ENCODE measurements at regions of chr4 and their contacts with region 1.

Region 1: DNA sequence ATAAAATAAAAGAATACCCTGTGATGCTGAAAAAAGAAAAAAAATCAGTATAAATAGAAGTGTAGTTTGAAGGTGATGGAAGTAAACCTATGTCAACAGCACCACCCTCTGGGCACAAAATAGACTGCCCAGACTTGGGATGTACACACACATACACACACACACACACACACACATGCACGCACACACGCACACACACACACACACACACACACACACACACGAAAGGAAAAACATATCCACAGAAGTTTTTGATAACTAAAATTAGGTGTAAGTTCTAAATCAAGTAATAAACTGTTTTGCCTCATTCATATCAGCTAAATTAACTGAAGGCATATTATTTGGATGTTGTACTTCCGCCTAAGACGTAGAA is 40.5 kb downstream of the ANXA5 start:
- ATAC-seq: peak; percentile 57 to 82 (median 70)
- H3K4me3 ChIP-seq: no peak overlapping the region
- H3K27ac ChIP-seq: no peak overlapping the region
- H3K4me1 ChIP-seq: no peaks in the 10 kb centered on the region

Region 2: DNA sequence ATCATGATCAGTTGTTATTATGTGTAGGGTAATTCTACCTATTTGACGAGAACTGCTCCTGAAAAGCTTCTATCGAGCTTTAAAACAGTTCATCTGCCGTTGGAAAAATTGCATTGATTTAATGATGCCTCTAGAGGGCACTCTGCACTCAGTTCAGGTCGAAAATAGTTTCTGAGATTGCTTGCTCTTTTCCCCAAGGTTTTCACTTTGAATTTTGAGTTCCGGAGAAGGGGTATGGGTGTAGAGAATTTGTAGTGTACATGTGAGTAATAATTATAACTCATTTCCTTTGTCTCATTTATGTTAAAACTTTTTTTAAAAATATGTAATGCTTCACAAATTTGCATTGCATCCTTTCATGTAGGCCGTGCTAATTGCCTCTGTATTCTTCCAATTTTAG is 463.8 kb before region 1 on chr4:
- in situ Hi-C with region 1: loop called in 1 of 9 experiments (anchors 25 kb)
- ATAC-seq: peak in 4 of 8 experiments; percentile 11 to 25 (median 18)
- H3K4me3 ChIP-seq: no peak overlapping the region
- H3K27ac ChIP-seq: no peak overlapping the region
- H3K4me1 ChIP-seq: no peaks in the 10 kb centered on the region

Region 3: GRCh38 chr4:121484633-121485032 is 171.6 kb before region 1 on chr4:
- in situ Hi-C with region 1: loop called in 1 of 9 experiments (anchors 10 kb)
- ATAC-seq: peak in 3 of 8 experiments; percentile 89 to 95 (median 92)
- H3K4me3 ChIP-seq: no peak overlapping the region
- H3K27ac ChIP-seq: no peak overlapping the region
- H3K4me1 ChIP-seq: no peaks in the 10 kb centered on the region

Measured in motor neuron (in vitro differentiated cells).